Esophagus muscularis mucosa (tissue), 4 donors: ENCODE measurements at regions of chr1 and their contacts with region 1.

Region 1: DNA sequence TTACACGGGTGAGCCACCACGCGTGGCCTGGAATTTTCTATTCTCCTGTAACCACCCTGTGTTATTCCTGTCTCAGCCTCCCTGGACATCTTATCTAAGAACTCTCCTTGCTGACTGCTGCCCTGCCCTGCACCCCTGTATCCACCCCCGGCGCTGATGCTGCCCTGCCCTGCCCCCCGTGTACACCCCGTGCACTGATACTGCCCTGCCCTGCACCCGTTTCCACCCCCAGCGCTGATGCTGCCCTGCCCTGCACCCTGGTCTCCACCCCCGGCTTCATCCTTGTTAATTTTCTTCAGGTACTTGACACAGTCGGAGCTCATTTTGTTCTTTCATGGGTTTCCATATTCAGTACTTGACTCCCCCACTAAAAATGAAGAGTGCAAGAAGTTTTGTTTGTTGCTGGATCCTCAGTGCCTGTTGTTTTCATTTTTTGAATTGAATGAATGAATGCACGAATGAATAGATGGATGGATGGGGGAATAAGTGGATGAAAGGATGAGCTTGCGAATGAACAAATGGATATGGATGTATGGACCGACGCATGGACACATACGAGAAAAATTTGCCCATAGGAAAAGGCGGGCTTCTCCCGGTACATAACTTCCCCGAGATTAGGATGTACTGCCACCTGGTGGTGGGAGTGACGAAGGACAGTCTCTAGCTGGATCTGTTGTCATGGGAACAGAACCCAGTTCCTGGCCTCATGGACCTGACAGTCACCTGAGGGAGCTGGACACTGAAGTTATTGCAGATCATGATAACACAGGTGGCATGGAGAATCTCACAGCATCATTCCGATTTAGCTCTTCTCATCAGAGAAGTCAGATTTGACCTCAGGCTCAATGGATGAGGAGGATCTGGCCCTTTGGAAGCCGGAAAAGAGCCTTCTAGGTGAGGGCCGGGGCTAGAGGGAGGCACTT is 14.9 kb downstream of the AADACL4 start:
- DNase-seq: no peak
- H3K4me3 ChIP-seq: no peak overlapping the region
- H3K27ac ChIP-seq: no peak overlapping the region
- H3K4me1 ChIP-seq: peaks cover 0 to 6% (median 5%) of the 10 kb centered on the region in 4 donors
- H3K27me3 ChIP-seq: no peaks in the 10 kb centered on the region
- CTCF ChIP-seq: peak; percentile 94 to 98 (median 97)
- EP300 ChIP-seq: no peak
- POLR2A ChIP-seq: no peak

Region 2: GRCh38 chr1:12275369-12275768 is 383.4 kb before region 1 on chr1:
- intact Hi-C with region 1: loop called (anchors 10 kb)
- DNase-seq: no peak
- H3K4me3 ChIP-seq: no peak overlapping the region
- H3K27ac ChIP-seq: peak overlapping the region in 2 of 4 donors; percentile 14 to 25
- H3K4me1 ChIP-seq: peaks cover 0 to 23% (median 4%) of the 10 kb centered on the region in 4 donors
- H3K27me3 ChIP-seq: no peaks in the 10 kb centered on the region
- CTCF ChIP-seq: peak; percentile 63 to 76 (median 67)
- EP300 ChIP-seq: no peak
- POLR2A ChIP-seq: no peak

Region 3: GRCh38 chr1:12314333-12314903 is 344.4 kb before region 1 on chr1:
- intact Hi-C with region 1: loop called (anchors 2 kb)
- DNase-seq: no peak
- H3K4me3 ChIP-seq: no peak overlapping the region
- H3K27ac ChIP-seq: peak overlapping the region; percentile 76 to 89 (median 84)
- H3K4me1 ChIP-seq: peaks cover 17 to 71% (median 61%) of the 10 kb centered on the region in 4 donors
- H3K27me3 ChIP-seq: no peaks in the 10 kb centered on the region
- CTCF ChIP-seq: peak; percentile 53 to 71 (median 60)
- EP300 ChIP-seq: no peak
- POLR2A ChIP-seq: no peak

Region 4: GRCh38 chr1:12610305-12610935 is 48.4 kb before region 1 on chr1:
- intact Hi-C with region 1: no loop called
- DNase-seq: no peak
- H3K4me3 ChIP-seq: no peak overlapping the region
- H3K27ac ChIP-seq: peak overlapping the region in 3 of 4 donors; percentile 16 to 53 (median 40)
- H3K4me1 ChIP-seq: peaks cover 44 to 78% (median 69%) of the 10 kb centered on the region in 4 donors
- H3K27me3 ChIP-seq: no peaks in the 10 kb centered on the region
- CTCF ChIP-seq: no peak
- EP300 ChIP-seq: no peak
- POLR2A ChIP-seq: no peak